Activated CD4-positive, alpha-beta T cell treated with anti-CD3 and anti-CD28 coated beads, Interleukin-2, amount 10 ng/mL, durations not matched to agents 7 days and 5 days (primary cell): ENCODE measurements at regions of chr21 and their contacts with region 1.

Region 1: DNA sequence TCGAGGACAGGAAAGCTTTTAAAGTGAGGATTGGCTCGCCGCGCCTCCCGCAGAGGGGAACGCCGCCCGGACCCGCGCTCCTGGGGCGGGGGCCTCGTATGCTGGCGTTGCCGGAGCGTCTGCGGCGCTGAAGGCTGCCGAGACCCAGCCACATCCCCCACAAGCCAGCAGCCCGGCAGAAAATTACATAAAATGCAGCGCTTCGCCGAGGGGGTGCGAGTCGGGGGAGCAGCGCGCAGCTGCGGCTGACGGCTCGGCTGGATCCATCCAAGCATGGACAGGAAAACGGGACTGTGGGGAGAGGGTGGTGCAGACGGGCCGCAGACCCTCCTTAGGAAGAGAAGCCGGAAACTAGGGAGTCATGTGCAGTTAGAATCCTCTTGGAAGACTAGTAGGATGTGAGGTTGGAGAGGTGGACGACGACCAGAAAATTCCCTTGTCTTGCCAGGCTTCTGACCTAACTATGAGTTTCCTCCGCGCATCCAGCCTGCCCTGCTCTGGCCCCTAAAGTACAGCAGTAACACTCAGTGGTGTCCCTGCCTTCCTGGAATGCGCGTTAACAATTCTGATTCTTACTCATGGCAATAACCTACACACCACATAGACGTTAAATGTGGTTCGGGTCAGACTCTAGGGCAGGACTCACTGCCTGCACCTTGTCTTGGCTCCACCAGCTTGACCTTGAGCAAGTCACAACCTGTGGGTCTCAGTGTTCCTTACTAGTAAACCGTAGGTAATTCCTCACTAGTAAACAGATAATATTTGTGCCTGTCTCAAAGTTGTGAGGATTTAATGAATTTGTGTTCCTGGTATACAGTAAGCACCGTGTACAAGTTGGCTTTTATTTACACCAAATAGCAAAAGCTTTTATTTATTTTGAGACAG is 953 bp upstream of the BRWD1 start:
- DNase-seq: peak; percentile 45
- H3K4me3 Mint-ChIP-seq: peak overlapping the region; percentile 97
- H3K27ac Mint-ChIP-seq: peak overlapping the region; percentile 96
- H3K4me1 Mint-ChIP-seq: peaks cover 35% of the 10 kb centered on the region
- H3K27me3 Mint-ChIP-seq: no peaks in the 10 kb centered on the region

Region 2: GRCh38 chr21:39348355-39349210 is 34.2 kb after region 1 on chr21 and contains the start of gene HMGN1:
- CTCF ChIA-PET with region 1: interaction called, 5 read pairs
- POLR2A ChIA-PET with region 1: interaction called, 16 read pairs
- DNase-seq: peak; percentile 89
- H3K4me3 Mint-ChIP-seq: peak within 1 kb of the TSS; percentile 99
- H3K27ac Mint-ChIP-seq: peak within 1 kb of the TSS; percentile 100
- H3K4me1 Mint-ChIP-seq: peaks cover 41% of the 10 kb centered on the region
- H3K27me3 Mint-ChIP-seq: peaks cover 2% of the 10 kb centered on the region
- total RNA-seq, gene HMGN1: 389 to 395 TPM

Region 3: GRCh38 chr21:39730418-39731170 is 416.2 kb after region 1 on chr21:
- CTCF ChIA-PET with region 1: no interaction called
- POLR2A ChIA-PET with region 1: no interaction called
- DNase-seq: no peak
- H3K4me3 Mint-ChIP-seq: no peak overlapping the region
- H3K27ac Mint-ChIP-seq: no peak overlapping the region
- H3K4me1 Mint-ChIP-seq: no peaks in the 10 kb centered on the region
- H3K27me3 Mint-ChIP-seq: no peaks in the 10 kb centered on the region